ENCODE measurements at regions of chr22 and their contacts with region 1.

Region 1: DNA sequence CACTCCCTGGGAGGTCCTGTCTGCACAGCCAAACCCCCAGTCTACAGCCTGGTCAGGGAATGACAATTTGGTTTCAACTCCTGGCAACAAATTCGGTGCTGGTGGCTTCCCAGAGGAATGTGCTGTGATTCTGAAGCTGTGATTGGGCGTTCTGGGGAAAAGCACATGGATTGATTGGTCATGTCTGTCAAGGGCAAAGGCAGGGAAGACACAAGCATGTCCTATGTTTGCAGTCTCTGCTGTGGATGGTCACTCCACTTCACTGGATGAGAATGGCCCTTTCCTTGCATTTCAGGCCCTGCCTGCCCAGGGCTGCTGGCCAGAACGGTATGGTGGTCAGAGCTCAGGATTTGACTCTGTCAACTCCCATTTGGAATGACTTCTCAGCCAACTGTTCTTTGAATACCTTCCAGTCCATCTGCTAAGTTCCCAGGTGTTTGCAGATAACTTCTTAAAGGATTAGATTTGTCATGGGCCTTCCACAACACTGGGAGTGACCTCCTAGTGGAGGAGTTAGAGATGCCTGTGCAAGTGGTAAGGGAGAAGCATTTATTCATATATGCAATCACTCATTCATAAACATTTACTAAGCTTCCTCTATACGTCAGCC is 42.7 kb downstream of the SGSM1 start:
- DNase-seq: no peak

Region 2: DNA sequence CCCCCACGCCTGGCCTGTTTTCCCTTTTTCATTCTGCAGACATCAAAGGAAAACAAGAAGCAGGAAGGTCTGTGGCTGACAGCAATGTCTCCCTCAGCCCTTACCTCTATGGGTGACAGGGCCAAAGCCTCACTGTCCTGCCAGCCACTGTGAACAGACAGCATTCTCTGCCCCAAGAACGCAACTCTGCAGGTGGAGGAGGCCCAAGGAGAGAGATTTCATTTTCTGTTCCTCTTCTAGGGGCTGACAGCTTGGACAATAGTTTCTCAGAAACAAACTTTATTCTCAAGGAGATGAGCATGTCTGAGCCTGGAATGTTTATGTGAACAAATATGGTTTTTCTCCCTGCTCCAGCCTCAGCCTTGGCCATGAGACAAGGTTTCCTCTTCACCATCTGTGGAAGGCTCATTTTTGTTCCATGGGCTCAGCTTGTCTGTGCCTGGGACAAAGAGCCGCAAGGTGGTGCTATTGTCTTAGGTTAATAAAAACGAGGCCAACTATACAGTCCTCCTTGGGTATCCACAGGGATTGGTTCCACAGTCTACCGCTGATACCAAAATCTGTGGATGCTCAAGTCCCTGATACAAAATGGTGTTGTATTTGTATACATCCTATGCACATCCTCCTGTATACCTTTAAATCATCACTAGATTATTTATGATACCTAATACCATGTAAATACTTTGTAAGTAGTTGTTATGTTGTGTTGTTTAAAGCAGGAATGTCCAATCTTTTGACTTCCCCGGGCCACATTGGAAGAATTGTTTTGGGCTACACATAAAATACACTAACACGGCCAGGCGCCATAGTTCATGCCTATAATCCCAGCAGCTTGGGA is 79.9 kb before region 1 on chr22:
- CTCF ChIA-PET with region 1: interaction called, 11 read pairs
- POLR2A ChIA-PET with region 1: no interaction called
- DNase-seq: peak; percentile 72

Region 3: GRCh38 chr22:24789516-24789915 is 59.1 kb before region 1 on chr22:
- CTCF ChIA-PET with region 1: no interaction called
- POLR2A ChIA-PET with region 1: no interaction called
- DNase-seq: no peak

Measured in HEK293T (cell line).